IMR-90 (cell line): ENCODE measurements at regions of chr13 and their contacts with region 1.

Region 1: GRCh38 chr13:37395566-37395965 is 203.0 kb downstream of the POSTN start:
- DNase-seq: peak; percentile 8
- ATAC-seq: peak; percentile 49; the same call in 1 of the 2 replicates
- H3K4me3 ChIP-seq: no peak overlapping the region
- H3K27ac ChIP-seq: no peak overlapping the region
- H3K4me1 ChIP-seq: no peaks in the 10 kb centered on the region
- H3K27me3 ChIP-seq: no peaks in the 10 kb centered on the region
- CTCF ChIP-seq: no peak
- POLR2A ChIP-seq: no peak
- RAD21 ChIP-seq: no peak

Region 2: GRCh38 chr13:37338726-37339385 is 56.7 kb before region 1 on chr13:
- CTCF ChIA-PET with region 1: no interaction called
- POLR2A ChIA-PET with region 1: no interaction called
- dilution Hi-C with region 1: no loop called
- in situ Hi-C with region 1: loop called (anchors 10 kb)
- intact Hi-C with region 1: no loop called
- DNase-seq: no peak
- ATAC-seq: no peak
- H3K4me3 ChIP-seq: no peak overlapping the region
- H3K27ac ChIP-seq: no peak overlapping the region
- H3K4me1 ChIP-seq: no peaks in the 10 kb centered on the region
- H3K27me3 ChIP-seq: no peaks in the 10 kb centered on the region
- CTCF ChIP-seq: no peak
- POLR2A ChIP-seq: no peak
- RAD21 ChIP-seq: no peak